IMR-90 (cell line): ENCODE measurements at regions of chr2 and their contacts with region 1.

Region 1: DNA sequence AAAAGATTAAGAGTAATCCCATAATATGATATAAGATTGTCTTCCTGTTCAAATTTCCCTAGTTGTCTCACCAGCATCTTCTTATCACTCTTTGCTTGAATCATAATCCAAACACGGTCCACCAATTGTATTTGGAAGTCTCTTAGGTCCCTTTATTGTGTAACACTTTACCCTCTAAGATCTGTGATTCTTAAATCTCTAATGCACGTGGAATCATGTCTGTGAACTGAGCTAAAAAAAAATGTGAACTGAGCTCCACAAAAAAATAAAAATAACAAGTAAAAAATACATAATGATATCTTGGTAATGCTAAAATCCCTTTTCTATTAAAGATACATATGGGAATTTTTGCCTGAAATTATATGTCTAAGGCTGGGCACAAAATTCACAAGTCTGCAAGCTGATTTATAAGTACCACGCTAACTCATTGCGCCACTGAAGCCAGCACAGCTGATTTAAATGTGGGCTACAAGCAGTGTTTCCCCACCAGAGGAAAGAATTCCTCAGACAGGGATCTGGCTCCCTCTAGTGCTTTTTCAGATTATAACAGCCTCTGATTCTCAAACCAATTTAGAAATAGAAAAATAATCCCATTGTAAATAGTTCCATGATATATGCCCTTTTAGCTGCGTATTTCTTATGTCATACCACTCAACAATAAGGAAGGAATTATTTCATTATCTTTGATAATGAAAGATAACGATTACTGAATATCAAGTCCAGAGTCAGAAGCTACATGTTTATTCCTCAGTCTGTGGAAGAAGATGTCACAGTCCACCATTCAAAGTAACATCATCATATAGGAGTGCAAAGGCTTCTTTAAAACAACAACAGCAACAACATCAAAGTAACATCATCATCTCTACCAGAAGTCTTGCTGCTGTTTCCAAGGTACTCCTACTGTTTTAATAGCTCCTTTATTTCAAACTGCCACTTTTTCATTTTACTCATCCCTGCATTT is 22.9 kb downstream of the RBM43 start:
- DNase-seq: peak; percentile 89
- ATAC-seq: peak; percentile 79
- H3K4me3 ChIP-seq: no peak overlapping the region
- H3K27ac ChIP-seq: no peak overlapping the region; the same call in 1 of the 2 replicates
- H3K4me1 ChIP-seq: peaks cover 9% of the 10 kb centered on the region
- H3K27me3 ChIP-seq: no peaks in the 10 kb centered on the region
- CTCF ChIP-seq: peak; percentile 95
- POLR2A ChIP-seq: peak; percentile 47; the same call in 1 of the 2 replicates
- RAD21 ChIP-seq: peak; percentile 99

Region 2: GRCh38 chr2:149743842-149744448 is 1494.9 kb before region 1 on chr2:
- CTCF ChIA-PET with region 1: no interaction called
- POLR2A ChIA-PET with region 1: no interaction called
- dilution Hi-C with region 1: no loop called
- in situ Hi-C with region 1: no loop called
- intact Hi-C with region 1: loop called (anchors 10 kb)
- DNase-seq: peak; percentile 97
- ATAC-seq: peak; percentile 73
- H3K4me3 ChIP-seq: no peak overlapping the region
- H3K27ac ChIP-seq: peak overlapping the region; percentile 98
- H3K4me1 ChIP-seq: peaks cover 36% of the 10 kb centered on the region
- H3K27me3 ChIP-seq: no peaks in the 10 kb centered on the region
- CTCF ChIP-seq: peak; percentile 48
- POLR2A ChIP-seq: no peak
- RAD21 ChIP-seq: peak; percentile 53

Region 3: GRCh38 chr2:150466741-150467620 is 771.8 kb before region 1 on chr2:
- CTCF ChIA-PET with region 1: interaction called, 3 read pairs
- POLR2A ChIA-PET with region 1: no interaction called
- dilution Hi-C with region 1: no loop called
- in situ Hi-C with region 1: loop called (anchors 5 kb)
- intact Hi-C with region 1: no loop called
- DNase-seq: peak; percentile 86
- ATAC-seq: peak; percentile 36
- H3K4me3 ChIP-seq: no peak overlapping the region
- H3K27ac ChIP-seq: peak overlapping the region; percentile 42; the same call in 1 of the 2 replicates
- H3K4me1 ChIP-seq: peaks cover 5% of the 10 kb centered on the region
- H3K27me3 ChIP-seq: no peaks in the 10 kb centered on the region
- CTCF ChIP-seq: no peak
- POLR2A ChIP-seq: peak; percentile 2; the same call in 1 of the 2 replicates
- RAD21 ChIP-seq: no peak

Region 4: GRCh38 chr2:150787353-150788093 is 451.3 kb before region 1 on chr2:
- CTCF ChIA-PET with region 1: no interaction called
- POLR2A ChIA-PET with region 1: no interaction called
- dilution Hi-C with region 1: no loop called
- in situ Hi-C with region 1: no loop called
- intact Hi-C with region 1: loop called (anchors 5 kb)
- DNase-seq: no peak
- ATAC-seq: no peak; the same call in 1 of the 2 replicates
- H3K4me3 ChIP-seq: no peak overlapping the region
- H3K27ac ChIP-seq: no peak overlapping the region; the same call in 1 of the 2 replicates
- H3K4me1 ChIP-seq: peaks cover 3% of the 10 kb centered on the region; the same call in 1 of the 2 replicates
- H3K27me3 ChIP-seq: no peaks in the 10 kb centered on the region
- CTCF ChIP-seq: no peak
- POLR2A ChIP-seq: no peak
- RAD21 ChIP-seq: no peak

Region 5: GRCh38 chr2:150911766-150912280 is 327.0 kb before region 1 on chr2:
- CTCF ChIA-PET with region 1: interaction called, 8 read pairs
- POLR2A ChIA-PET with region 1: no interaction called
- dilution Hi-C with region 1: no loop called
- in situ Hi-C with region 1: no loop called
- intact Hi-C with region 1: loop called (anchors 2 kb)
- DNase-seq: peak; percentile 95
- ATAC-seq: peak; percentile 95
- H3K4me3 ChIP-seq: peak overlapping the region; percentile 17; the same call in 1 of the 2 replicates
- H3K27ac ChIP-seq: peak overlapping the region; percentile 43
- H3K4me1 ChIP-seq: peaks cover 7% of the 10 kb centered on the region; the same call in 1 of the 2 replicates
- H3K27me3 ChIP-seq: no peaks in the 10 kb centered on the region
- CTCF ChIP-seq: peak; percentile 54
- POLR2A ChIP-seq: no peak
- RAD21 ChIP-seq: peak; percentile 69

Region 6: DNA sequence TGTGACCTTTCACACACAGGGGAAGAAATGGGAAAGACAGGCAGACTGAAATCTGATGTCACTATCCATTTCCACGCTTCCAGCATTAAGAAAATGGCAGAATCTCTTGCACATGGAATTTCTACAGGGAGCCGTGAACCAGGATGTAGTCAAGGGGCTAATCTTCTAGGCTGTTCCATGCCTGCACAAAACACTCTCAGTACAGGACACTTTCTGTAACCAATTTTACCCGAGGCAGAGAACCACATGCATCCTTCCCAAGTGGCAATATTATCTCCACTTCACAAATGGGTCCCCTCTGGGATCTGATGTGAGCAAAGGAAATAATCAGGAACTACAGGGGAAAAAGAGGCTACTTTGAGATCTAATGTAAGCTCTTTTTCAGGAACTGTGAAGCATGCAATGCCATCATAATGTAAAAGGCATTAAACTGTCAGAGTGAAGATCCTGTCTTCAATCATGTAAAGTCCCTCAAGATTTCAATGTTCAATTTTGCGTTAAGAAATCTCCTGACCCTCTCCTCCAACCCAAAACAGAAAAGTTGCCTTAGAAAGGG is 214.0 kb before region 1 on chr2:
- CTCF ChIA-PET with region 1: no interaction called
- POLR2A ChIA-PET with region 1: no interaction called
- dilution Hi-C with region 1: no loop called
- in situ Hi-C with region 1: no loop called
- intact Hi-C with region 1: no loop called
- DNase-seq: no peak
- ATAC-seq: no peak
- H3K4me3 ChIP-seq: no peak overlapping the region
- H3K27ac ChIP-seq: no peak overlapping the region
- H3K4me1 ChIP-seq: no peaks in the 10 kb centered on the region; the same call in 1 of the 2 replicates
- H3K27me3 ChIP-seq: no peaks in the 10 kb centered on the region
- CTCF ChIP-seq: no peak
- POLR2A ChIP-seq: no peak
- RAD21 ChIP-seq: no peak

Region 7: GRCh38 chr2:151051574-151052220 is 187.1 kb before region 1 on chr2:
- CTCF ChIA-PET with region 1: no interaction called
- POLR2A ChIA-PET with region 1: no interaction called
- dilution Hi-C with region 1: no loop called
- in situ Hi-C with region 1: no loop called
- intact Hi-C with region 1: loop called (anchors 5 kb)
- DNase-seq: peak; percentile 67
- ATAC-seq: peak; percentile 71
- H3K4me3 ChIP-seq: no peak overlapping the region
- H3K27ac ChIP-seq: no peak overlapping the region
- H3K4me1 ChIP-seq: peaks cover 2% of the 10 kb centered on the region; the same call in 1 of the 2 replicates
- H3K27me3 ChIP-seq: no peaks in the 10 kb centered on the region
- CTCF ChIP-seq: peak; percentile 71
- POLR2A ChIP-seq: no peak
- RAD21 ChIP-seq: peak; percentile 71